ENCODE measurements at regions of chr2 and their contacts with region 1.

Region 1: GRCh38 chr2:7427293-7428060 is 510.3 kb downstream of the RNF144A start:
- DNase-seq: peak; percentile 4
- H3K4me3 ChIP-seq: no peak overlapping the region
- H3K27ac ChIP-seq: no peak overlapping the region
- H3K4me1 ChIP-seq: peaks cover 8 to 10% of the 10 kb centered on the region in 2 donors
- H3K27me3 ChIP-seq: no peaks in the 10 kb centered on the region
- CTCF ChIP-seq: peak in 5 of 6 experiments; percentile 47 to 81 (median 72)
- POLR2A ChIP-seq: no peak

Region 2: DNA sequence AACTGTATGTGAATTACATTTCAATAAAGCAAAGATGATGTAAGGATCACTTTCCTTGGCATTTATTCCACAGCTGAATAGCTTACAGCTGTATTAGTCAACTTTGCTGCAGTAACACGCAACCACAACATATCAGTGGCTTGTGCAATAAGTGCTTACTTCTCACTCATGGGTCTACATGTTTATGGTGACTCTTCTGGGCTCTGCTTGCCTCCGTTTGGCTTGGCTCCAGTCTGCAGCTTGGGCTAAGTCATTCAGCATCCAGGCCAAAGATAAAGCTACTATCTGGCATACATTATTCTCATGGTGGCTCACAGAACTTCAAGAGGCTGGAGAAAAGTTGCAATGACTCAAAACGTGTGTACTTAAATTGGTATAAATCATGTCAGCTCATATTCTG is 155.3 kb before region 1 on chr2:
- intact Hi-C with region 1: no loop called
- DNase-seq: no peak
- H3K4me3 ChIP-seq: no peak overlapping the region
- H3K27ac ChIP-seq: no peak overlapping the region
- H3K4me1 ChIP-seq: no peaks in the 10 kb centered on the region
- H3K27me3 ChIP-seq: no peaks in the 10 kb centered on the region
- CTCF ChIP-seq: no peak
- POLR2A ChIP-seq: no peak

Region 3: GRCh38 chr2:8685697-8686358 is 1258.4 kb after region 1 on chr2:
- intact Hi-C with region 1: loop called (anchors 2 kb)
- DNase-seq: peak; percentile 72 to 75
- H3K4me3 ChIP-seq: peak overlapping the region; percentile 22 to 73 (median 51)
- H3K27ac ChIP-seq: peak overlapping the region; percentile 88 to 91 (median 90)
- H3K4me1 ChIP-seq: peaks cover 4 to 6% of the 10 kb centered on the region in 2 donors
- H3K27me3 ChIP-seq: no peaks in the 10 kb centered on the region
- CTCF ChIP-seq: peak; percentile 48 to 100 (median 98)
- POLR2A ChIP-seq: no peak

Measured in thyroid gland (tissue), 4 donors.